ENCODE measurements at regions of chr12 and their contacts with region 1.

Region 1: DNA sequence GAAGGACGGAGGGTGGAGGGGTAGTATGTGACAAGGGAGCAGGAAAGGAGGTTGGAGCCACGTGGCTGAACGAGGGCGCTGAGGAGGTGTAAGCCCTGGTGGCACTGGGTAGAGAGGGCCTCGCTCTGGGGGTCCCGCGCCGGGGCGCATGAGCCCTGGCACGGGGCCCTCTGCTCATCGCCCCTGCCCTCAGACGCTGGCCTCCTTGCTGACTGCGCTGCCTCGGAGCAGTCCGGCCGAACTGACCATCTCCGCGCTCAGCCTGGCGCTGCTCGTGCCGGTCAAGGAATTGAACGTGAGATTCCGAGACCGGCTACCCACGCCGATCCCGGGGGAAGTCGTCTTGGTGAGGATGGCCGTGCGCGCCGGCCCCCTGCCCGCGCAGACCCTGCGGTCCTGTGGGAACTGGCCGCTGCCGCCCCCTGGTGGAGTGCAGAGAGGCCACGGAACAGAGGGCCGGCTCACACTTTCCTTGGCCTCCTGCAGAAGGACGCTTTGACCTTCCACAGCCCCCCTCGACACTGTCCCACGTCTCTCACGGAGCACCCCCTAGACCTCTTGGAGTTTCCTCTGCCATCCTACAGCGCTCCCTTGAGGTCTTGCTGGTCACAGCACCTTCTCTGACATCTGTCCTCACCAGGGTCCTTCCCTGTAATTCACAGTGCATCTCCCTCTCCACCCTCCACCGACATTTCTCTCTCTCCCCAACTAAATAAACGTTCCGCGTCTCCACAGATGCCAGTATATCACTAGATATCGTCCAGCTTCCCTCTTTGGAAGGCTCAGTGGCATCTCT is 10.5 kb downstream of the ARHGEF25 start:
- DNase-seq: peak; percentile 59
- ATAC-seq: peak; percentile 83
- H3K4me3 Mint-ChIP-seq: peak overlapping the region; percentile 54
- H3K27ac Mint-ChIP-seq: no peak overlapping the region
- H3K4me1 Mint-ChIP-seq: peaks cover 24% of the 10 kb centered on the region
- H3K27me3 Mint-ChIP-seq: peaks cover 98% of the 10 kb centered on the region

Region 2: GRCh38 chr12:57590536-57591479 is 30.9 kb before region 1 on chr12 and contains the start of gene PIP4K2C:
- CTCF ChIA-PET with region 1: interaction called, 148 read pairs
- DNase-seq: peak; percentile 89
- ATAC-seq: peak; percentile 98
- H3K4me3 Mint-ChIP-seq: peak within 1 kb of the TSS; percentile 83
- H3K27ac Mint-ChIP-seq: peak within 1 kb of the TSS; percentile 81
- H3K4me1 Mint-ChIP-seq: peaks cover 22% of the 10 kb centered on the region
- H3K27me3 Mint-ChIP-seq: no peaks in the 10 kb centered on the region
- total RNA-seq, gene PIP4K2C: 21.4 to 22.2 TPM